ENCODE measurements at regions of chr2 and their contacts with region 1.

Region 1: DNA sequence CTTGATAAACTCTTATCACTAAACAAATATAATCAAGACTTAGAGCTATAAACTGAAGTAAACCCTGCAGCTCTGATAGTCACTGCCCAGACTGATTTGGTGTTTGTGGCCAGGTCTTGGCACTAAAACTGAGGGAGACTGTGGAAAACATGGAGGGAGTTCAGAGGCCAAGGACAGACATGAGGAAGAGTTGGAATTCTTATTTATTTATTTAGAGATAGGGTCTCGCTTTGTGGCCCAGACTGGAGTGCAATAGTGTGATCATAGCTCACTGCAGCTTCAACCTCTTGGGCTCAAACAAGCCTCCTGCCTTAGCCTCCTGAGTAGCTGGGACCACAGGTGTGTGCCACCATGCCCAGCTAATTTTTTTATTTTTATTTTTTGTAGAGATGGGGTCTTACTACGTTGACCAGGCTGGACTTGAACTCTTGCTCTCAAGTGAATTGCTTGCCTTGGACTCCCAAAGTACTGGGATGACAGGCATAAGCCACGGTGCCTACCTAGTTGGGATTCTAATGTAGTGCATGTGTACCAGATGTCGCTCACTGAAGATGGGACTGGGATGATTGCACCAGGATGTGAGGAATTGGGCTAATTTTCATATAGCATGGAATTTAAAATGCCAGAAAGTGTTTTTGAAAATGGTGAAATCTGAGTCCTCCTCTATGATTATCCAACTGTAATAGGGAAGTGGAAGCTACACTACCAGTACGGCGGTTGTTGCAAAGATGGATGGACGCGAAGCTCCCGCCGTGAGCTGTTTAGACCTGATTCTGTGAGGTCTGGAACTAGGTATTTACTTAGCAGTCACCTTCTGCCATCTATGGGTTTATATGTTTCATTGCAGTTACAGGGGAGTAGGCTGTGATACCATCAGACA is 52.7 kb upstream of the CTLA4 start:
- DNase-seq: peak; percentile 49
- H3K4me3 Mint-ChIP-seq: no peak overlapping the region
- H3K27ac Mint-ChIP-seq: peak overlapping the region; percentile 98
- H3K4me1 Mint-ChIP-seq: peaks cover 73% of the 10 kb centered on the region
- H3K27me3 Mint-ChIP-seq: no peaks in the 10 kb centered on the region
- CTCF ChIP-seq: peak; percentile 68

Region 2: GRCh38 chr2:203225423-203226039 is 589.4 kb before region 1 on chr2:
- CTCF ChIA-PET with region 1: interaction called, 11 read pairs
- intact Hi-C with region 1: loop called (anchors 5 kb)
- DNase-seq: peak; percentile 43
- H3K4me3 Mint-ChIP-seq: no peak overlapping the region
- H3K27ac Mint-ChIP-seq: no peak overlapping the region
- H3K4me1 Mint-ChIP-seq: no peaks in the 10 kb centered on the region
- H3K27me3 Mint-ChIP-seq: no peaks in the 10 kb centered on the region
- CTCF ChIP-seq: peak; percentile 76

Region 3: GRCh38 chr2:203535078-203535783 is 279.7 kb before region 1 on chr2 and contains the start of gene RAPH1:
- CTCF ChIA-PET with region 1: interaction called, 4 read pairs
- intact Hi-C with region 1: loop called (anchors 5 kb)
- DNase-seq: peak; percentile 88
- H3K4me3 Mint-ChIP-seq: peak within 1 kb of the TSS; percentile 93
- H3K27ac Mint-ChIP-seq: peak within 1 kb of the TSS; percentile 85
- H3K4me1 Mint-ChIP-seq: peaks cover 19% of the 10 kb centered on the region
- H3K27me3 Mint-ChIP-seq: no peaks in the 10 kb centered on the region
- CTCF ChIP-seq: no peak
- total RNA-seq, gene RAPH1: 126 and 141 TPM in 2 replicates

Region 4: GRCh38 chr2:203650860-203651613 is 163.9 kb before region 1 on chr2:
- CTCF ChIA-PET with region 1: interaction called, 10 read pairs
- intact Hi-C with region 1: loop called (anchors 1 kb)
- DNase-seq: peak; percentile 44
- H3K4me3 Mint-ChIP-seq: peak overlapping the region; percentile 40
- H3K27ac Mint-ChIP-seq: peak overlapping the region; percentile 87
- H3K4me1 Mint-ChIP-seq: peaks cover 61% of the 10 kb centered on the region
- H3K27me3 Mint-ChIP-seq: no peaks in the 10 kb centered on the region
- CTCF ChIP-seq: peak; percentile 48

Region 5: GRCh38 chr2:203683932-203684556 is 130.9 kb before region 1 on chr2:
- CTCF ChIA-PET with region 1: interaction called, 12 read pairs
- intact Hi-C with region 1: loop called (anchors 1 kb)
- DNase-seq: peak; percentile 81
- H3K4me3 Mint-ChIP-seq: peak overlapping the region; percentile 52
- H3K27ac Mint-ChIP-seq: peak overlapping the region; percentile 100
- H3K4me1 Mint-ChIP-seq: peaks cover 76% of the 10 kb centered on the region
- H3K27me3 Mint-ChIP-seq: no peaks in the 10 kb centered on the region
- CTCF ChIP-seq: no peak

Region 6: DNA sequence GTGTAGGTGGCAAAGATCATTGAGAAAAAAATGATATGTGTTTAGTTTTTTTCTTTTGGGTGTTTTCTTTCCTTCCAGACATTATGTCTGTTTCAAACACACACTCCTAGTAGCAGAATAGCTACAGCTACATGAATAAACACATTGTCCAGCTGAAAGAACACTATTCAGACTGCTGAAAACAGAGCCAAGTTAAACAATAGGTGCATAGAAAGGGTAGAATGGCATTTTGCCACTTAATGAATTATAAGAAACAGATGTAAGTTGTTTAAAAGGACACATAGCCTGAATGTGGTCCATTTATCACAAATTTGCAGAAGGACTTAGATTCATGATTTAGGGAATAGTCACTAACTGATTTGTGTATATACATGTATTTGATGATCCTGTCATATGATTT is 72.8 kb after region 1 on chr2:
- CTCF ChIA-PET with region 1: no interaction called
- intact Hi-C with region 1: no loop called
- DNase-seq: no peak
- H3K4me3 Mint-ChIP-seq: no peak overlapping the region
- H3K27ac Mint-ChIP-seq: no peak overlapping the region
- H3K4me1 Mint-ChIP-seq: no peaks in the 10 kb centered on the region
- H3K27me3 Mint-ChIP-seq: no peaks in the 10 kb centered on the region
- CTCF ChIP-seq: no peak

Measured in Calu3 (cell line).